Panc1 (cell line): ENCODE measurements at regions of chr3 and their contacts with region 1.

Region 1: GRCh38 chr3:185264849-185265553 is 11.2 kb upstream of the EHHADH start:
- DNase-seq: no peak
- ATAC-seq: no peak
- H3K4me3 ChIP-seq: no peak overlapping the region
- H3K27ac ChIP-seq: no peak overlapping the region
- H3K4me1 ChIP-seq: no peaks in the 10 kb centered on the region; the same call in 1 of the 2 replicates
- H3K27me3 ChIP-seq: no peaks in the 10 kb centered on the region
- CTCF ChIP-seq: no peak

Region 2: GRCh38 chr3:184811999-184812661 is 452.9 kb before region 1 on chr3 and contains the start of gene VPS8:
- CTCF ChIA-PET with region 1: no interaction called
- POLR2A ChIA-PET with region 1: no interaction called
- in situ Hi-C with region 1: no loop called
- intact Hi-C with region 1: no loop called
- DNase-seq: peak; percentile 89
- ATAC-seq: peak; percentile 97
- H3K4me3 ChIP-seq: peak within 1 kb of the TSS; percentile 90 to 98
- H3K27ac ChIP-seq: peak within 1 kb of the TSS; percentile 88
- H3K4me1 ChIP-seq: peaks cover 13% of the 10 kb centered on the region
- H3K27me3 ChIP-seq: no peaks in the 10 kb centered on the region
- CTCF ChIP-seq: peak; percentile 40
- total RNA-seq, gene VPS8: 72.3 TPM

Region 3: GRCh38 chr3:185216607-185216958 is 48.4 kb before region 1 on chr3:
- CTCF ChIA-PET with region 1: interaction called, 10 read pairs
- POLR2A ChIA-PET with region 1: no interaction called
- in situ Hi-C with region 1: no loop called
- intact Hi-C with region 1: no loop called
- DNase-seq: no peak
- ATAC-seq: no peak
- H3K4me3 ChIP-seq: no peak overlapping the region
- H3K27ac ChIP-seq: no peak overlapping the region
- H3K4me1 ChIP-seq: 0 out of 2 replicates have a peak, but pooled peaks cover 7% of the 10 kb centered on the region
- H3K27me3 ChIP-seq: no peaks in the 10 kb centered on the region
- CTCF ChIP-seq: no peak